Sciatic nerve (tissue), 2 donors: ENCODE measurements at regions of chr4 and their contacts with region 1.

Region 1: GRCh38 chr4:184395971-184396391 is 78.4 kb downstream of the IRF2 start:
- DNase-seq: no peak
- ATAC-seq: no peak

Region 2: GRCh38 chr4:184329659-184330400 is 66.2 kb before region 1 on chr4:
- intact Hi-C with region 1: loop called (anchors 10 kb)
- DNase-seq: peak; percentile 72
- ATAC-seq: peak; percentile 90

Region 3: DNA sequence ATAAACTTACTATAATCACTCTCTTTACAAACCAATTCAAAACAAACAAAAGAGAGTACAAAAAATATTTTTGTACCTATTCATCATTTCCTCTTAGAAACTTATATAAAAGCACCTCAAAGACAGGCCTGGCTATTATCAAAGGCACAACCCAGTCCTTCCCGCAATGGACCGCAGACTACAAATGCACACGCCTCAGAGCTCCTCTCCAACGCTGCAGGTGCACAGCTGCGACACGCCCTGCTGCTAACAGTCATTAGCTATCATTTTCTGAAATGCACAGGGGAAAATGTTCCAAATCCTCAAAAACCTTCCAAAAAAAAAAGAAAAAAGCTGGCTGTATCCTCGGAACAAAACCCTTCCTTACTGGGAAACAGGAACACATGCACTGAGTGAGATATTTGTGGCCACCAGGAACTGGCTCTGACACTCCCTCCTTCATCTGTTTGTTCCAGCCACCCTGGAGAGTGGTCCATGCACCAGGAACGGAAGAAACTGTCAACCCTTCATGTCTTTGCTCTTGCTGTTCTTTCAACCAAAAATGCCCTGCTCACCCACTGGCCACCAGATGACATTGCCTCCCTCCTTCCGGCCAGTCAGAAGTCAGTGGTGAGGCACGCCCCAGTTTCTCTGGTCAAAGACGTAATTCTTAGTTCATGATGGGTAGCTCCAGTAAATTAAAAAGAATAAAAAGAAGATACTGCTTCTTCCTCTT is 61.7 kb after region 1 on chr4:
- intact Hi-C with region 1: no loop called
- DNase-seq: no peak
- ATAC-seq: peak; percentile 44